ENCODE measurements at regions of chr7 and their contacts with region 1.

Region 1: DNA sequence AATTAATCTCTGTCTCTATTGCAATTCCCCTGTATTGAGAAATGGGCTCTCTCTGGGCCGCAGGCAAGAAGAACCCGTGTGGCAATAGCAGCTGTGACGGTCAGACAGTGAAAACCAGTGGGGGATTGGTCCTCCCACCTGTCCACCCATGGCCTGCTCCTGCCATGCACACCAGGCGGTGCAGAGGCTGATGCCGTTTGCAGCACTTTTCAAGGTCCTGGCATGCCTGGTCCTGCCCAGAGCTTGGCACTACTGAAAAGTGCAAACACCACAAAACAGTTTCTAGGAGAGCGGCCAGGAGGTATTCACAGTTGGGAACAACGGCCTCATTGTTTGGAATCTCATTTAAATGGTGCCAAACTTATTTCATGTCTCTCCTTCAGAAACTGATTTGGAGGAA is 41.5 kb downstream of the PSPH start:
- DNase-seq: no peak
- H3K4me3 ChIP-seq: no peak overlapping the region
- H3K27ac ChIP-seq: peak overlapping the region in 3 of 4 donors; percentile 16 to 44 (median 39)
- H3K4me1 ChIP-seq: peaks cover 0 to 19% (median 12%) of the 10 kb centered on the region in 4 donors
- H3K27me3 ChIP-seq: no peaks in the 10 kb centered on the region
- CTCF ChIP-seq: no peak
- EP300 ChIP-seq: no peak
- POLR2A ChIP-seq: no peak

Region 2: DNA sequence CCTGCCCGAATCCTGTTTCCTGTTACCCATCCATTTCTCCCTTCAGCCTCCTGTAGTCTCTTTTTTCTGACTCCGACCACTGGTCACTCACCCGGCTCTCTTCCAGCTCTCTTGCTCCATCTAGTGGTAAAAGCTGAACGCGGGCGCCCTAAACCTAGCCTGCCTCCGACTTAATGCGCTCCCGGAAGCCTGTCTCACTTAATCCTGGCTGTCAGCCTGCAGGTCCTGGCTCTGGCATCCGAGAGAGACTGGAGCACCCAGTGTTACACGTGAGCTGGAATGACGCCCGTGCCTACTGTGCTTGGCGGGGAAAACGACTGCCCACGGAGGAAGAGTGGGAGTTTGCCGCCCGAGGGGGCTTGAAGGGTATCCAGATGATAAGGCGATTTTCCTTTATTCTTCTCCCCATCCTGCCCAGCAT is 64.7 kb after region 1 on chr7:
- intact Hi-C with region 1: loop called (anchors 1 kb)
- DNase-seq: peak; percentile 96
- H3K4me3 ChIP-seq: no peak overlapping the region
- H3K27ac ChIP-seq: peak overlapping the region in 3 of 4 donors; percentile 63 to 73 (median 65)
- H3K4me1 ChIP-seq: peaks cover 0 to 16% (median 12%) of the 10 kb centered on the region in 4 donors
- H3K27me3 ChIP-seq: no peaks in the 10 kb centered on the region
- CTCF ChIP-seq: peak; percentile 80 to 95 (median 92)
- EP300 ChIP-seq: no peak
- POLR2A ChIP-seq: no peak